Natural killer cell (primary cell): ENCODE measurements at regions of chr4 and their contacts with region 1.

Region 1: GRCh38 chr4:109702950-109703663 is at the start of gene CASP6:
- DNase-seq: peak; percentile 66 to 87
- ATAC-seq: peak; percentile 92
- H3K4me3 ChIP-seq: peak within 1 kb of the TSS; percentile 66
- H3K4me3 Mint-ChIP-seq: peak within 1 kb of the TSS; percentile 98
- H3K27ac ChIP-seq: peak within 1 kb of the TSS; percentile 29
- H3K27ac Mint-ChIP-seq: peak within 1 kb of the TSS; percentile 85 to 92
- H3K4me1 ChIP-seq: peaks cover 17% of the 10 kb centered on the region
- H3K4me1 Mint-ChIP-seq: peaks cover 25 to 30% of the 10 kb centered on the region in 2 donors
- H3K27me3 ChIP-seq: no peaks in the 10 kb centered on the region
- H3K27me3 Mint-ChIP-seq: peaks cover 0 to 4% of the 10 kb centered on the region in 2 donors
- CTCF ChIP-seq: peak; percentile 71
- total RNA-seq, gene CASP6: 3.4 to 6.0 (median 4.8) TPM

Region 2: DNA sequence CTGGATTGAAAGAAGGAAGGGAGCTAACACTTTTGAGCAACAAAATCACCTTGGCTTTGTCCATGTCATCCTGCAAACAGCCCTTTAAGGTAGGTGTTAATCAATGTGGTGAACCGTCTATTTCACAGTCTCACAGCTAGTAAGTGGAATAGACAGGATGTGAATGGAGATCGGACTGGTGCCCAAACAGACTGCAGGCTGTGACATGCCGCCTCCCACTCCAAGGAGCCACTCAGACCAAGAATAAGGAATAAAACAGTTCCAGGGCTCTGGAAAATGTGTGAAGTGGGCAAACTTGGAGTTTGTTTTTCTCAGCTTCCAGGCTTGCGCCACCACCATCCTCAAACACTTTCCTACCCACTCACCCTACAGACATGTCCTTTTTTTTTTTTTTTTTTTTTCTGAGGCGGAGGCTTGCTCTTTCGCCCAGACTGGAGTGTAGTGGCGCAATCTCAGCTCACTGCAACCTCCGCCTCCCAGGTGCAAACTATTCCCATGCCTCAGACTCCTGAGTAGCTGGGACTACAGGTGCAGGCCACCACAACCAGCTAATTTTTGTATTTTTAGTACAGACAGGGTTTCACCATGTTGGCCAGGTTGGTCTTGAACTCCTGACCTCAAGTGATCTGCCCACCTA is 327.2 kb before region 1 on chr4:
- intact Hi-C with region 1: no loop called
- DNase-seq: no peak
- ATAC-seq: peak in 1 of 3 donors; percentile 52
- H3K4me3 ChIP-seq: no peak overlapping the region
- H3K4me3 Mint-ChIP-seq: no peak overlapping the region
- H3K27ac ChIP-seq: no peak overlapping the region
- H3K27ac Mint-ChIP-seq: no peak overlapping the region
- H3K4me1 ChIP-seq: no peaks in the 10 kb centered on the region
- H3K4me1 Mint-ChIP-seq: no peaks in the 10 kb centered on the region
- H3K27me3 ChIP-seq: peaks cover 8% of the 10 kb centered on the region
- H3K27me3 Mint-ChIP-seq: peaks cover 23 to 38% of the 10 kb centered on the region in 2 donors
- CTCF ChIP-seq: no peak

Region 3: DNA sequence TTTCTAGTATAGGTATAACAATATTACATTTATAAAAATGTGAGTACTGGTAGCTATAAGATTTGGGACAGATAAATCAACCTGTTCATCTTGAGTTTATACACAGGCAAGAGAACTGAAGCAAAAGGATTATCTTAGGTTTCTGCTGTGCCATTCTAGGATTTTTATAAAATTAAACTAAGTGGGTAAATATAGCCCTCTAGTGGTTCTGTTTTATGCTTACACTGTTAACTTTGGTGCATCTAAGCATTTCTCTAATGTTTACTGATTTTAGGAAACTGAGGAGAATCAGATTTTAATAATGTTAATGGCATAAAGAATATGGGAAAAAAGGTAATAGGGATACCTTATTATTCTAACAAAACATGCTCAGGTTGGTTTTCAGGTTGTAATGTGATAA is 123.6 kb after region 1 on chr4:
- intact Hi-C with region 1: loop called (anchors 1 kb)
- DNase-seq: peak in 1 of 2 donors; percentile 46
- ATAC-seq: peak; percentile 44 to 64 (median 57)
- H3K4me3 ChIP-seq: no peak overlapping the region
- H3K4me3 Mint-ChIP-seq: no peak overlapping the region
- H3K27ac ChIP-seq: no peak overlapping the region
- H3K27ac Mint-ChIP-seq: no peak overlapping the region
- H3K4me1 ChIP-seq: no peaks in the 10 kb centered on the region
- H3K4me1 Mint-ChIP-seq: no peaks in the 10 kb centered on the region
- H3K27me3 ChIP-seq: no peaks in the 10 kb centered on the region
- H3K27me3 Mint-ChIP-seq: no peaks in the 10 kb centered on the region
- CTCF ChIP-seq: peak; percentile 64

Region 4: DNA sequence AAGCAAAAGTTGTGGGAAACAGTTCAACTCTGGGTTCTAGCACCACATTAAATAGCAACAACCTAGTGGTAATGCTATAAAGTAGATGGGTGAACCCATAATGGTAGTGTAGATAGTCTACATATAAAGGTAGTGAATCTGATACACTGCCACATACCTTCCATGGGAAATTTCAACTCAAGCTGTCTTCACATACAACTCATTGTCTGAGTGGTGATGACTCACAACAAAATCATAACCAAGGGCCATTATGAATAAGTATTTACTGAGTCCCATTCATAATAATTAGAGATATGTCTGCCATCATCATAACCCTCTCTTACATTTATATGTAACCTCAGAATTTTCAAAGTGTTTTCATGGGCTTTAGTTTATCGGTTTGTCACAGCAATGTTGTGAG is 244.3 kb after region 1 on chr4:
- intact Hi-C with region 1: no loop called
- DNase-seq: no peak
- ATAC-seq: peak in 1 of 3 donors; percentile 10
- H3K4me3 ChIP-seq: no peak overlapping the region
- H3K4me3 Mint-ChIP-seq: no peak overlapping the region
- H3K27ac ChIP-seq: no peak overlapping the region
- H3K27ac Mint-ChIP-seq: no peak overlapping the region
- H3K4me1 ChIP-seq: no peaks in the 10 kb centered on the region
- H3K4me1 Mint-ChIP-seq: no peaks in the 10 kb centered on the region
- H3K27me3 ChIP-seq: no peaks in the 10 kb centered on the region
- H3K27me3 Mint-ChIP-seq: peaks cover 0 to 5% of the 10 kb centered on the region in 2 donors
- CTCF ChIP-seq: no peak